ENCODE measurements at regions of chr19 and their contacts with region 1.

Region 1: DNA sequence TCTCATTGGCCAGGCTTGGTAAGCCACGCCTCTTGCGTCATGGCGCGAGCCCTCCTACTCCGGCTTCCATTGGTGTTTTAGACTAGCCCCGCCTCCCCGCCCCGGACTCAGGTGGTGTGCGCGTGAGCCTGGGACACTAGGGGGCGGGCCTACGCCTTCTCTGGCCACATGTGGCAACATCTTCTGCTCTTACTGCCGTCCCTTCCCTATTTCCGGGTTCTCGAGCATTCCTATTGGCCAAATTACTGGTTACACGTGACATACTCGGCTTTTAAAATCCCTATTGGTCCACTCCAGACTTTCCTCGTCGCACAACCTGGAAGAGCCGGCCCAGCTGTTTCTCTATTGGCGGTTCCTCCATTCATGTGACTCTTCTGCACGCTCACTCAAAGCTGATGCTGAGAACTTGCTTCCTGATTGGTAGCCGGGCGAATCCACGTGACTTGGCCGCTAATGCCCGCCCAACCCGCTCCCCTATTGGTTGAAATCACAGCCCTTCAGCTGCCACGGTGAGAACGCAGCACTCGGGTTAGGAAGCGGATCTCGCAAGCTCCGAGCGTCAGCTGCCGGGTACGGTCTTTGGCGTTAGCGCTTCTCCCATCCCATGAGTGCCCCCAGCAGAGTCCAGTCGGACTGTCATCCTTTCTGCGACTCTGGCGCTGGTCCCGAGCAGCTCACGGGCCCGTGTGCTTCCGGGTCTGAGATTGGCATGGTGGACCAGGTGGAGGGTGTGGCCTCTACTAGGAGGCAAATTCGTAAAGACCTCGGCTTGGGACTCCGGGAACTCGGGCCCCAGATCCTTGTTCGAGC is at the start of gene BLOC1S3:
- DNase-seq: peak; percentile 100
- H3K4me3 ChIP-seq: peak within 1 kb of the TSS; percentile 97
- H3K27ac ChIP-seq: peak within 1 kb of the TSS; percentile 97
- H3K27me3 ChIP-seq: no peaks in the 10 kb centered on the region
- CTCF ChIP-seq: peak; percentile 36; the same call in 1 of the 2 replicates
- polyA plus RNA-seq, gene BLOC1S3: 7.0 and 8.2 TPM in 2 replicates

Region 2: GRCh38 chr19:45154064-45154827 is 24.2 kb before region 1 on chr19:
- CTCF ChIA-PET with region 1: no interaction called
- POLR2A ChIA-PET with region 1: interaction called, 11 read pairs
- DNase-seq: no peak
- H3K4me3 ChIP-seq: 0 out of 2 replicates have a peak overlapping the region, but pooled peaks have one; percentile 7
- H3K27ac ChIP-seq: no peak overlapping the region
- H3K27me3 ChIP-seq: peaks cover 14% of the 10 kb centered on the region
- CTCF ChIP-seq: peak; percentile 1; the same call in 1 of the 2 replicates

Region 3: DNA sequence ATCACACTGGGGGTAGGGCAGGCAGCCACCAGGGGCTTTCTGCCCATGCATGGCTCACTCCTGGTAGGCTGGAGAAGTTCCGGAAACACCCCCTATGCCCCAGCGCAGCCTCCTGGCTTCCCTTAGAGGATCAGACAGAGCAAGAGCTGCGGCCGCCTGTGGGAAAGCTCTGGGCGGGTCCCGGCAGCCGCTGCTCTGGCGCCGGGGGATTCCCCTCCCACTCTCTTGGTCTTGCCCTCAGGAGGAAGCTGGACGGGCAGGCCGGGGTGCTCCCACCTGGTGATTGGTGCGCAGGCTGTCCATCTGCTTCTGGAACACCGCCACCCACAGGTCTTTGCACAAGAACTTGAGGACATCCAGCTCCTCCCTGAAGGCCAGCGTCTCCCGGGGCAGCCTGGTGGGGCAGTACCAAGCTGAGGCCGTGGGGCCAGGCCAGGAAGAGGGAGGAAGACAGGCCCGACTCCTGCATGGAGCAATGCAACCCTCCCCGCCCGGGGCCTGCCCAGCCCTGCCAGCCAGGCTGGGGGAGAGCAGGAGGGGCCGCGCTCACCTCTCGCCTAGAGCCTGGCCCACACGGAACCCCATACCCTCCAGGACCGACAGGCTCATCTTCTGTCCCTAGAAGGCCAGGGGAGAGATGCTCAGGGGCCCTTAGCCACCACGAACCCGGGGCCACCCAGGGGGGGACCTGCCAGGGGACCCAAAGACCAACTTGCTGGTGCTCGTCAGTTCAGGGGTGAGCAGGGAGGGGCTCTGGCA is 13.7 kb before region 1 on chr19:
- CTCF ChIA-PET with region 1: no interaction called
- POLR2A ChIA-PET with region 1: interaction called, 10 read pairs
- DNase-seq: no peak
- H3K4me3 ChIP-seq: no peak overlapping the region
- H3K27ac ChIP-seq: no peak overlapping the region
- H3K27me3 ChIP-seq: peaks cover 6% of the 10 kb centered on the region
- CTCF ChIP-seq: no peak